ENCODE measurements at regions of chr12 and their contacts with region 1.

Region 1: GRCh38 chr12:52278541-52279421 is 4.3 kb downstream of the KRT86 start:
- DNase-seq: peak; percentile 29 to 80 (median 63)
- ATAC-seq: peak; percentile 92
- H3K4me3 ChIP-seq: no peak overlapping the region
- H3K4me3 Mint-ChIP-seq: no peak overlapping the region
- H3K27ac ChIP-seq: no peak overlapping the region
- H3K27ac Mint-ChIP-seq: no peak overlapping the region
- H3K4me1 ChIP-seq: peaks cover 8% of the 10 kb centered on the region
- H3K4me1 Mint-ChIP-seq: peaks cover 8% of the 10 kb centered on the region
- H3K27me3 ChIP-seq: peaks cover 8 to 17% of the 10 kb centered on the region in 2 experiments
- H3K27me3 Mint-ChIP-seq: peaks cover 63% of the 10 kb centered on the region
- CTCF ChIP-seq: peak; percentile 96

Region 2: GRCh38 chr12:51951843-51952722 is 326.7 kb before region 1 on chr12:
- CTCF ChIA-PET with region 1: no interaction called
- POLR2A ChIA-PET with region 1: no interaction called
- intact Hi-C with region 1: no loop called
- DNase-seq: peak in 6 of 14 experiments; percentile 2 to 33 (median 16)
- ATAC-seq: no peak
- H3K4me3 ChIP-seq: peak overlapping the region; percentile 74
- H3K4me3 Mint-ChIP-seq: peak overlapping the region; percentile 86
- H3K27ac ChIP-seq: no peak overlapping the region
- H3K27ac Mint-ChIP-seq: peak overlapping the region; percentile 66
- H3K4me1 ChIP-seq: peaks cover 24% of the 10 kb centered on the region
- H3K4me1 Mint-ChIP-seq: peaks cover 51% of the 10 kb centered on the region
- H3K27me3 ChIP-seq: peaks cover 0 to 2% of the 10 kb centered on the region in 2 experiments
- H3K27me3 Mint-ChIP-seq: no peaks in the 10 kb centered on the region
- CTCF ChIP-seq: no peak

Region 3: DNA sequence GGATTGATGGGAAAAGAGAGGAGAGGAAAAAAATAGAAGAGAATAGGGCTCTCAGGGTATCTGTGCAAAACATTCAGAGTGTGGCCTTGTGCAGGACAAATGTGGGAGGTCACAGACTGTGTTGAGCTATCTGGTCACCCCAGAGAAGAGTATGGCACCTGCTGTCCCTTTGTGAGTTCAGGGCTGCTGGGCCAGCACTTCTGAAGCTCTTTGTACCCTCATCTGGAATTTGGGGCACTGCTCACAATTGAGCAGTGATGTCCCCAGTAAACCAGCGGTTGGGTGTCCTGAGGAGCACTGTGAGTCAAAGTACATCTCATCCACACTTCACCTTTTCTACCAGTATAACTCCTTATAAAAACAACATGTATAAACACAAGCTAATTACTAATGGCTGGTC is 15.1 kb after region 1 on chr12:
- CTCF ChIA-PET with region 1: interaction called, 10 read pairs
- POLR2A ChIA-PET with region 1: no interaction called
- intact Hi-C with region 1: no loop called
- DNase-seq: no peak
- ATAC-seq: no peak
- H3K4me3 ChIP-seq: no peak overlapping the region
- H3K4me3 Mint-ChIP-seq: no peak overlapping the region
- H3K27ac ChIP-seq: no peak overlapping the region
- H3K27ac Mint-ChIP-seq: no peak overlapping the region
- H3K4me1 ChIP-seq: no peaks in the 10 kb centered on the region
- H3K4me1 Mint-ChIP-seq: no peaks in the 10 kb centered on the region
- H3K27me3 ChIP-seq: peaks cover 0 to 14% of the 10 kb centered on the region in 2 experiments
- H3K27me3 Mint-ChIP-seq: peaks cover 25% of the 10 kb centered on the region
- CTCF ChIP-seq: no peak

Measured in CD4-positive, alpha-beta T cell (primary cell).